Activated B cell treated with CpG ODN at 0.5 μM for 24 hours (primary cell): ENCODE measurements at regions of chr10 and their contacts with region 1.

Region 1: DNA sequence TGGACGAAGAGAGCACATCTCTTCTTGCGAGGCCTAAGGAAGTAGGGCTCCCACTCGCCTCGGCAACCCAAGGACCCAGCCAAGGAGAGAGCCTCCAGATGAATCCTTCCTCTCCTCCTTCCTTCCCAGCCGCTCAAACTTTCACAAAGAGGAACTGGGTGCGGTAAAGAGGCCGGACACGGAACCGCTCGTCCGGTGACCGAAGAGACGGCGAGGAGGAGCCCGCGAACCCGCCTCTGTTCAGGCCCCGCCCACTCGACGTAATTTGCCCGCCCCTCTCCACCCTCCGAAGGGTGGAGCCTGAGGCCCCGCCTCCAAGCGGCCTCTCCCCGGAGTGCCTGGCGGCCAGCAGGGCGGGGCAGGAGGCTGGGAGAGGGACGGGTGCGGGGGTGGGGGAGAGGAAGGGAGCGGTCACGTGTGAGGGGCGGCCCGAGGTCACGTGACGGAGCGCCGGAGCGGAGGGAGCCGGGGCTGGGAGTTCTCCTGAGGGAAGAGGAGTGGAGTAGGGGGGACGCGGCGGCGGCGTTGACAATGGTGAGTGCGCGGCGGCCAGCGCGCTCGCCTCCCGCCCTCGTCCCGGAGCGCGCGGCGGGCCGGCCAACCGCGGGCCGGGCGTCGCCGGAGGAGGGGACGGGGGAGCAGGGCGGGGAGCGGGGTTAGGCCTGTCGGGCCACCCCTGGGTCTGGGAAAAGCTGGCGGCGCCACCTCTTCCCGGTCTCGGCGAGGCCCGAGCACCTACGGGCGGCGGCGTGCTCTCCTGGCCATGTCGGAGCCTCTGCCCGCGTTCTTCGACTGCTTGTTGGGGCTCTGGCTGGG is at the start of gene VPS26A:
- DNase-seq: peak; percentile 100
- ATAC-seq: peak; percentile 94
- H3K4me3 Mint-ChIP-seq: peak within 1 kb of the TSS; percentile 93
- H3K27ac Mint-ChIP-seq: peak within 1 kb of the TSS; percentile 98
- H3K4me1 Mint-ChIP-seq: peaks cover 25% of the 10 kb centered on the region
- H3K27me3 Mint-ChIP-seq: no peaks in the 10 kb centered on the region
- CTCF ChIP-seq: no peak
- total RNA-seq, gene VPS26A: 25.9 and 29.5 TPM in 2 replicates

Region 2: DNA sequence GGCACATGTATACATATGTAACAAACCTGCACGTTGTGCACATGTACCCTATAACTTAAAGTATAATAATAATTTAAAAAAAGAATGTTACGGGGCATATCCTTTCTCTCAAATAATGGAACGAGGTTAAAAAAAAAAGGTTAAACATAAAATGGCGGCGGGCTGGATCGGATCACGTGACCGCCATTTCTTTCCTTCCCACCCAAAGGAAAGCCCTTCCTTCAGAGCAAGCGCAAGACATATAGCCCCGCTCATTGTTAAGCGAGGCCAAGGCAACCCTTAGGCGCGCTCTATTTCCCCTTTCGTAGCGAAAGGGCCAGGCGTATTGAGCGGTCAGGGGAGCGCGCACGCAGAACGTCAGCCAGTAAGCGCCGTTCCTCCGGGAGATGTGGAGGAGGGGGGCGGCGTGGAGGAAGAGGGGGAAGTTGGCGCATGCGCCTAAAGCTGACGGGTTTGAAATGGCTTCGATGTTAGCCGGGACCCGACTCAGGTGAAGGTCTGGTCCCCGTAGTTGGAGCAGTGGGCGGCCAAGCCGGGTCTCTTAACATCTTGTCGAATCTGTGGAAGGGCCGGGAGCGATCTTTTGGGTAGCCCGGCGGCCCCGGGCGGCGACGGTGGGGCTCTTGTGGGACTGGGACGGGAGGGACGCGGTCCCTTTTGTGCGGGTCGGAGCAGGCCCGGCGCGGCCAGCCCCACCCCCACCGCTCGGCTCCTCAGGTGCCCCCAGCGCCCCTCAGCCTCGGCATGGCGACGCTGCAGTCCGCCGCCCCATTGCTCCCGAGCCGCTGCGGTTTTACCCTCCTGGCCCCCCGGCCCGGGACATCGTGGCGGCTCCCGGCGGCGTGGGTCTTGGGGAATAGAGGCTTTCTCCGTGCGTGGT is 402.9 kb before region 1 on chr10 and contains the start of gene CCAR1:
- CTCF ChIA-PET with region 1: no interaction called
- POLR2A ChIA-PET with region 1: interaction called, 4 read pairs
- intact Hi-C with region 1: loop called (anchors 2 kb)
- DNase-seq: peak; percentile 93
- ATAC-seq: peak; percentile 98
- H3K4me3 Mint-ChIP-seq: peak within 1 kb of the TSS; percentile 92
- H3K27ac Mint-ChIP-seq: peak within 1 kb of the TSS; percentile 98
- H3K4me1 Mint-ChIP-seq: peaks cover 14% of the 10 kb centered on the region
- H3K27me3 Mint-ChIP-seq: no peaks in the 10 kb centered on the region
- CTCF ChIP-seq: no peak
- total RNA-seq, gene CCAR1: 88.2 and 98.8 TPM in 2 replicates

Region 3: GRCh38 chr10:68988530-68989316 is 135.2 kb before region 1 on chr10 and contains the start of gene KIFBP:
- CTCF ChIA-PET with region 1: interaction called, 3 read pairs
- POLR2A ChIA-PET with region 1: no interaction called
- intact Hi-C with region 1: loop called (anchors 1 kb)
- DNase-seq: peak; percentile 58
- ATAC-seq: peak; percentile 87
- H3K4me3 Mint-ChIP-seq: peak within 1 kb of the TSS; percentile 97
- H3K27ac Mint-ChIP-seq: peak within 1 kb of the TSS; percentile 88
- H3K4me1 Mint-ChIP-seq: peaks cover 40% of the 10 kb centered on the region
- H3K27me3 Mint-ChIP-seq: no peaks in the 10 kb centered on the region
- CTCF ChIP-seq: no peak
- total RNA-seq, gene KIFBP: 6.5 and 7.7 TPM in 2 replicates

Region 4: GRCh38 chr10:69087590-69088470 is 36.1 kb before region 1 on chr10 and contains the start of gene SRGN:
- CTCF ChIA-PET with region 1: no interaction called
- POLR2A ChIA-PET with region 1: interaction called, 8 read pairs
- intact Hi-C with region 1: loop called (anchors 1 kb)
- DNase-seq: peak; percentile 26
- ATAC-seq: peak; percentile 71
- H3K4me3 Mint-ChIP-seq: peak within 1 kb of the TSS; percentile 84
- H3K27ac Mint-ChIP-seq: peak within 1 kb of the TSS; percentile 95
- H3K4me1 Mint-ChIP-seq: peaks cover 56% of the 10 kb centered on the region
- H3K27me3 Mint-ChIP-seq: no peaks in the 10 kb centered on the region
- CTCF ChIP-seq: no peak
- total RNA-seq, gene SRGN: 91.4 and 95.5 TPM in 2 replicates

Region 5: DNA sequence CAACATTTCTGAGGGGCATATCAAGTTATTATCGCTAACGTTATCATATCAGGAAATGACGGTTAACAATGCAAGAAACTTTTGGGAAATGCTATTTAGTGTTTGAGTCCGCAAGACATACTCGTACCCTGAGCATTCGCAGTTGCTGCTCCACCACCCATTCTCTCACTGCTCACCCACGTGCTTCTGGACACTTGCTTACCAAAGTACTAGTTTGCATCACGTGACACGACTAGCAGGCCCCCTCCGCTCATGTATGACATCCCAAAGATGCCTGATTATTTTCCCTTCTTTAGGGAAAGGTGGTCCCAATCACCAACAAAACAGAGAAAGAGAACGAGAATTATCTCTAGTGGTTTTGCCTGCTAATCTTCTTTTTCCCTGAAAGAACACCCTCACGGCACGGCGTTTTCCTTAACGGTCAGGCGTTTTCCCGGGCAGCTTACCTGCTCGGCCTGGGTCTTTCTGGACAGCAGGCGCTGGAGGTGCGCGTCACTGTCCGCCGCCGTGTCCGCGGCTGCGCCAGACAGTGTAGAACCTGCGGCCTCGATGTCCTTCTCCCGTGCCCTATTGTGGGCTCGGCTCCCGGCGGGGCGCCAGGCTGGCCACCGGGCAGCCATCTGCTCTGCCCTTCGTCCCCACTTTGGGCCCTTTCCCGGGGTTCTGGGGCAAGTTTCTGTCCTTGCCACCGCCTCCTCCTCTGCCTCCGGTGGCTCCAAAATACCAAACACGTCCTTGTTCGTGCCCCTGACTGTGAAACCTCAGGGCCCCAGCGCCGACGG is 56.0 kb after region 1 on chr10 and contains the start of gene SUPV3L1:
- CTCF ChIA-PET with region 1: no interaction called
- POLR2A ChIA-PET with region 1: interaction called, 6 read pairs
- intact Hi-C with region 1: loop called (anchors 1 kb)
- DNase-seq: peak; percentile 87
- ATAC-seq: peak; percentile 87
- H3K4me3 Mint-ChIP-seq: peak within 1 kb of the TSS; percentile 95
- H3K27ac Mint-ChIP-seq: peak within 1 kb of the TSS; percentile 100
- H3K4me1 Mint-ChIP-seq: peaks cover 39% of the 10 kb centered on the region
- H3K27me3 Mint-ChIP-seq: no peaks in the 10 kb centered on the region
- CTCF ChIP-seq: no peak
- total RNA-seq, gene SUPV3L1: 38.7 and 49.1 TPM in 2 replicates

Region 6: GRCh38 chr10:69318106-69318866 is 194.3 kb after region 1 on chr10:
- CTCF ChIA-PET with region 1: no interaction called
- POLR2A ChIA-PET with region 1: no interaction called
- intact Hi-C with region 1: loop called (anchors 2 kb)
- DNase-seq: peak; percentile 87
- ATAC-seq: peak; percentile 93
- H3K4me3 Mint-ChIP-seq: peak overlapping the region; percentile 92
- H3K27ac Mint-ChIP-seq: peak overlapping the region; percentile 82
- H3K4me1 Mint-ChIP-seq: peaks cover 40% of the 10 kb centered on the region
- H3K27me3 Mint-ChIP-seq: no peaks in the 10 kb centered on the region
- CTCF ChIP-seq: no peak